ENCODE measurements at regions of chr7 and their contacts with region 1.

Region 1: DNA sequence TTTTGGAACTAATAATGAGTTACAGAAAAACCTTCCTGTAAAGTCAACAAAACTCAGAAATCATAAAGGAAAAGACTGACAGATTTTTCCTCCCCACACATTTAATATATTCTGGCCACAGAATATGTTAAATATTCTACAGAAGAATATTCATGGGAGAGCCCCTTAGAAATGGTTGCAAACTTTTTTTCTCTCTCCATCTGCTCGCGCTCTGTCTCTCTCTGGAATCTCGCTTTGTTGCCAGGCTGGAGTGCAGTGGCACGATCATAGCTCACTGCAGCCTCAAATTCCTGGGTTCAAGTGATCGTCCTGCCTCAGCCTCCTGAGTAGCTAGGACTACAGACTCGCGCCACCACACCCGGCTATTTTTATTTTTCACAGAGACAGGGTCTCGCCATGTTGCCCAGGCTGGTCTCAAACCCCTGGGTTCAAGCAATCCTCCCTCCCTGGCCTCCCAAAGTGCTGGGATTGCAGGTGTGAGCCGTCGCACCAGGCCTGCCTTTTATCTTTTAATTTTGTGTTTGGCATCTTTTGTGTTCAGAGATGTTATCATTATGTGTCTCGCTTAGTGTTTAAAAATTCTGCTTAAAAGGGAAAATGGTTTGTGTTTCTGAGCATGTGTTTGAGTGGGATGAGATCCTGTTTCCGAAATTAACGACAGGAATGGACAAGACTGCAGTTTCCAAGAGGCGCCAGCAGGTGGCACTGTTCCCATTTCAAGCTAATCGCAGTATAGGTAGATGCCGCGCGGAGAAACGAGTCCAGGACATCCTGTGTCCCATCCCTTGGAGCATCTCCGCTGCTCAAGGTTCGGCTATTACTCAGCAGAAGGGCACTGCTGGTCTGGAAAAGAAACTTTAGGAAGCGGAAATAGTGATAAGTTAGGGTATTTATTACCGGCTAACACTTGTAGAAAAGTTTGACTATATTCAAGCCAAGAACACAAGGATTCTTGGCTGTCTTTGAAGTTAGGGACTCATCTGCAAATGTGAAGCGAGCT is 23.1 kb upstream of the ST7 start:
- DNase-seq: peak; percentile 26 to 93
- H3K4me3 ChIP-seq: peak overlapping the region in 1 of 2 donors; percentile 9
- H3K27ac ChIP-seq: no peak overlapping the region
- H3K4me1 ChIP-seq: no peaks in the 10 kb centered on the region
- H3K27me3 ChIP-seq: no peaks in the 10 kb centered on the region
- CTCF ChIP-seq: peak; percentile 83 to 91 (median 89)

Region 2: GRCh38 chr7:116984917-116985316 is 54.7 kb after region 1 on chr7:
- intact Hi-C with region 1: loop called (anchors 2 kb)
- DNase-seq: no peak
- H3K4me3 ChIP-seq: no peak overlapping the region
- H3K27ac ChIP-seq: no peak overlapping the region
- H3K4me1 ChIP-seq: no peaks in the 10 kb centered on the region
- H3K27me3 ChIP-seq: no peaks in the 10 kb centered on the region
- CTCF ChIP-seq: peak; percentile 38 to 69 (median 59)

Region 3: GRCh38 chr7:117119192-117119924 is 189.1 kb after region 1 on chr7:
- intact Hi-C with region 1: loop called (anchors 1 kb)
- DNase-seq: peak in 1 of 2 donors; percentile 91
- H3K4me3 ChIP-seq: no peak overlapping the region
- H3K27ac ChIP-seq: no peak overlapping the region
- H3K4me1 ChIP-seq: peaks cover 2 to 5% of the 10 kb centered on the region in 2 donors
- H3K27me3 ChIP-seq: no peaks in the 10 kb centered on the region
- CTCF ChIP-seq: peak; percentile 75 to 84 (median 83)

Region 4: GRCh38 chr7:117127585-117128168 is 197.5 kb after region 1 on chr7:
- intact Hi-C with region 1: loop called (anchors 1 kb)
- DNase-seq: peak in 1 of 2 donors; percentile 72
- H3K4me3 ChIP-seq: no peak overlapping the region
- H3K27ac ChIP-seq: no peak overlapping the region
- H3K4me1 ChIP-seq: peaks cover 7 to 12% of the 10 kb centered on the region in 2 donors
- H3K27me3 ChIP-seq: no peaks in the 10 kb centered on the region
- CTCF ChIP-seq: peak; percentile 60 to 68 (median 66)

Region 5: DNA sequence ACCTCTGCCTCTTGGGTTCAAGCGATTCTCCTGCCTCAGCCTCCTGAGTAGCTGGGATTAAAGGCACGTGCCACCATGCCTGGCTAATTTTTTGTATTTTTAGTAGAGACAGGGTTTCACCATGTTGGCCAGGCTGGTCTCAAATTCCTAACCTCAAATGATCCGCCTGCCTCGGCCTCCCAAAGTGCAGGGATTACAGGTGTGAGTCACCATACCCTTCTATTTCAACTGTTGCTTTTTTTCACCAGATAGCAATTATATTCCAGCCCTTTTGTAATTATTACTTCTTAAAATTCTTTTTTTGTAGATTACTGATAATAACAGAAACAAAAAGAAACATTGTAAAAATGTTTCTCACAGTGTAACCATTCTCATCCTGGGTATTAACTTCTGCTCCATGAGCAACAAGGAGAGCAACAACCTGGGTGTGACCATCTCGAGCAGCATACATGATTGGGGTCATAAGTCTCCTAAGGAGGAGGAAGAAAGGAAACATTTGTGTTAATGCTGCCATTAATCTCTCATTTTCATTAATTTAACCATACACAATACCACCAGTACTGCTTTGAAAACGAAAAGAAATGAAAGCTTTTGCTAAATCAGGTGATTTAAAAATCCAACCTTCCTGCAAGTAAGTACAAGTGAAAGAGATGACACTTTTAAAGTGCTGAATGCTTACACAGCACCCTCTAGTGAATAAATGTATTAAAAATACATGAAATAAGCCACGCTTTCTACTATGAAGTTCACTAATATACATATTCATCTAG is 455.3 kb after region 1 on chr7:
- intact Hi-C with region 1: loop called (anchors 10 kb)
- DNase-seq: no peak
- H3K4me3 ChIP-seq: no peak overlapping the region
- H3K27ac ChIP-seq: no peak overlapping the region
- H3K4me1 ChIP-seq: no peaks in the 10 kb centered on the region
- H3K27me3 ChIP-seq: no peaks in the 10 kb centered on the region
- CTCF ChIP-seq: peak in 2 of 3 experiments; percentile 20 to 52